ENCODE measurements at regions of chr12 and their contacts with region 1.

Region 1: DNA sequence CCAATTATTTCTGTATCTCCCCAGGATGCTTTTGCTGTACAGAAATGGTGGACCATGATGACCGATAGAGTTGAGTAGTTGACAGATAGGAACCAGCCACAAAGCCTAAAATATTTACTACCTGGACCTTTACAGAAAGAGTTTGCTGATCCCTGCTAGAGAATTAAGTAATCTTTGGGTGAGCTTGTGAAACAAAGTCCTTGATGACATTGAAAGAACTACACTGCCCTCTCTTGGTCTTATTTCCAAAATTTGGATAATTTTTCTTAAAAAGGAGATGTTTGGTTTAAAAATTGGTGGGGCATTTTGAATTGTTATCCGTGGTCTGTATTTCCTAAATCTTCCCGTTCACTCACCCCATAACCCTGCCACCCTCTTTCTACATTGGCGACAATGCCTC is 13.7 kb upstream of the TCTN1 start:
- DNase-seq: no peak
- H3K4me3 Mint-ChIP-seq: no peak overlapping the region
- H3K27ac Mint-ChIP-seq: no peak overlapping the region
- H3K4me1 Mint-ChIP-seq: peaks cover 13% of the 10 kb centered on the region
- H3K27me3 Mint-ChIP-seq: no peaks in the 10 kb centered on the region

Region 2: GRCh38 chr12:110234755-110235154 is 365.5 kb before region 1 on chr12:
- CTCF ChIA-PET with region 1: no interaction called
- POLR2A ChIA-PET with region 1: no interaction called
- DNase-seq: no peak
- H3K4me3 Mint-ChIP-seq: no peak overlapping the region
- H3K27ac Mint-ChIP-seq: no peak overlapping the region
- H3K4me1 Mint-ChIP-seq: no peaks in the 10 kb centered on the region
- H3K27me3 Mint-ChIP-seq: peaks cover 14% of the 10 kb centered on the region

Region 3: GRCh38 chr12:110468212-110469048 is 131.8 kb before region 1 on chr12 and contains the starts of genes FAM216A and GPN3:
- CTCF ChIA-PET with region 1: interaction called, 81 read pairs
- POLR2A ChIA-PET with region 1: interaction called, 24 read pairs
- DNase-seq: peak; percentile 98
- H3K4me3 Mint-ChIP-seq: peak within 1 kb of the TSS; percentile 92
- H3K27ac Mint-ChIP-seq: peak within 1 kb of the TSS; percentile 95
- H3K4me1 Mint-ChIP-seq: peaks cover 37% of the 10 kb centered on the region
- H3K27me3 Mint-ChIP-seq: no peaks in the 10 kb centered on the region
- total RNA-seq, gene FAM216A: 14.7 to 16.7 TPM
- total RNA-seq, gene GPN3: 18.9 to 21.6 TPM

Region 4: GRCh38 chr12:110513842-110514241 is 86.4 kb before region 1 on chr12:
- CTCF ChIA-PET with region 1: interaction called, 150 read pairs
- POLR2A ChIA-PET with region 1: interaction called, 5 read pairs
- DNase-seq: no peak
- H3K4me3 Mint-ChIP-seq: no peak overlapping the region
- H3K27ac Mint-ChIP-seq: no peak overlapping the region
- H3K4me1 Mint-ChIP-seq: no peaks in the 10 kb centered on the region
- H3K27me3 Mint-ChIP-seq: peaks cover 5% of the 10 kb centered on the region

Region 5: DNA sequence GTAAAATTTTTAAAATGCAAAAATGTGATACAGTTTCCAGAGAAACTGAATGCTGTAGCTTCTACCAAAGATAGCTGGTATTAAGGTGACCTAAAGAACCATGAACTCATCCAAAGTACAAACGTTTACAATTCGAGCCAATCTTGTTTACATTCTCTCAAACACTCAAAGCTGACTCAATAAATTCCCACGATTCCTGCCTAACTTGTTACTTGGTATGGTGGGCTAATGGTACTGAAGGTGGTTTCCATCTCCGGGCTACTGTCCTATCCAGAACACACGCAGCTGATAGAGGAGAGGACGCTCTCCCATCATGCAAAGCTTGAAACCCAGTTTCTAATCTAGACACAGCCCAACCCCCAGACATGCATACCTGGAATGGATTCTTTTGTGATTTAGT is 66.6 kb before region 1 on chr12:
- CTCF ChIA-PET with region 1: interaction called, 24 read pairs
- POLR2A ChIA-PET with region 1: interaction called, 3 read pairs
- DNase-seq: no peak
- H3K4me3 Mint-ChIP-seq: no peak overlapping the region
- H3K27ac Mint-ChIP-seq: no peak overlapping the region
- H3K4me1 Mint-ChIP-seq: peaks cover 17% of the 10 kb centered on the region
- H3K27me3 Mint-ChIP-seq: no peaks in the 10 kb centered on the region

Region 6: DNA sequence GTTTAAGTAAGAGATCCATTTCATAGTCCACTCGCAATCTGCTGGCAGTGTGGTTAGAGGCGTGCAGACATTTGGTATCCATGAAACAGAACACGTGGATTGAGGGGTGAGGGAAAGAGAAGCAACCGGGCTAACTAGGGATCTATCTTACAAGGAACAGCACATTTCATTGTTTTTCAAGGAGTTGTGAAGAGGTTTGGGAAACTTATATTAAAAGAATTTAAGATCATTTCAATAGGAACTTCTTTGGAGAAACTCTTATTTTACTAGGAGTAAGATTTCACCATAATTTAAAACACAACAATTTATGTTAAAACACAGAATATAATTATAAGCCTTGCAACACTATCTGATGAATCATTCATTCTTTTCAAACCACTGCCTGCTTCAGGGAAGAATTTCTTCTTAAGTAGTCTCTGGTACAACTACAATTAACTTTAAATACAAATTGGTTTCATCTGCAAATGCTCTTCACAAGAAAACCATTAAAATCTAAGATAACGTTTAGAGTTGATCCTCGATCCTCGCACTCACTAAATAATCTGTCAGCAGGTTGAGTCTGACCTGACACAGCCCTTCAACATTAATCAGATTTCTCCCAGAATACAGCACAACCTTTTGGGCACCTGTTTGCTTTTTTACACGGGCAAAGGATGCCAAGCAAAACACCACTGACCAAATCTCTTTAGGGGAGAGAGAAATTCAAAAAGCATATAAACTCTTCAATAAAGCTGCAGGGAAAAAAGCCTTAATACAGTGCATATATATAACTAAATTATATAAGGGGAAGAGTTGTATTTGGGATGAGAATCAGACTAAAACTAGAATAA is 44.5 kb before region 1 on chr12:
- CTCF ChIA-PET with region 1: interaction called, 110 read pairs
- POLR2A ChIA-PET with region 1: interaction called, 15 read pairs
- DNase-seq: no peak
- H3K4me3 Mint-ChIP-seq: no peak overlapping the region
- H3K27ac Mint-ChIP-seq: no peak overlapping the region
- H3K4me1 Mint-ChIP-seq: peaks cover 30% of the 10 kb centered on the region
- H3K27me3 Mint-ChIP-seq: no peaks in the 10 kb centered on the region

Region 7: DNA sequence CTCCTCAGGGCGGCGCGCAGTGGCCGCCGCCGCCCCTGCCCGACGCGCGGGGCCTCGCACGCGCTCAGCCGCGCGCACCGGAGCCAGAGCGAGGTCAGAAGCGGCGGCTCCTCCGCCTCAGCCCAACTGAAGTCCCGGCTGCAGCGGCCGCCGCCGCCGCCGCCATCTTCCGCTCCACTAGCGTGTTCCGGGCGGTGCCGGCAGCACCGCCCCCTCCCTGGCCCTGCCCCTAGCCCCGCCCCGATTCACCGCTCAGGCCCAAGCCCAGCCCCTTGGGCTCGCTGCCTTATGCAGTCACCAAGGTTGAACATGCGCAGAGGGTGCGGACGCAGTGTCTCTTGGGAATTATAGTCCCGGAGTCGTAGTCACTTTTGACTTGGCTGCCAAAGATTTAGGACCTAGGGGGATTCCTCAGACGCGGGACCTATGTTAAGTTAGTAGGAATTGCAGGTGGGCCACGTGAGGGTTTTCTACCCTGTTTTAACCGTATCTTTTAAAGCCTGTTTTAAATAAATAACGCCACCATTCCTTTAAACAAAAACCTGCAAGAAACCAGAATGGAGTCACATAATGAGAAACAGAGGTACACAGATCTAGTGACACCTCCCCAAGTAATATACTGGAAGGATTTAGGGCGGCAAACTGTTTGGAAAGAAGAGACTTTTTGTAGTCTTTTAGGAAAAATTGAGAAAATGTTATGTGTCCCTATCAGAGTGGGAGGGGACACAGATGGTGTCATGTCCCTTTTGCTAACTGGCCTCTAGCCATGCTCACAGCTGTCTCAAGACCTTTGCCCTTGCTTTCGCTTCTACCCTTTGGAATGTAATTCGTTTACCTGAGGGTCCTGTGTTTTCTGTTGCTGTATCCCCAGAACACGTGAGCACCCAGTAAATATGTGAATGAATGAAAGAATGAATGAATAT is 16.9 kb before region 1 on chr12 and contains the start of gene PPTC7:
- CTCF ChIA-PET with region 1: interaction called, 27 read pairs
- POLR2A ChIA-PET with region 1: interaction called, 13 read pairs
- DNase-seq: peak; percentile 97
- H3K4me3 Mint-ChIP-seq: peak within 1 kb of the TSS; percentile 88
- H3K27ac Mint-ChIP-seq: peak within 1 kb of the TSS; percentile 88
- H3K4me1 Mint-ChIP-seq: peaks cover 64% of the 10 kb centered on the region
- H3K27me3 Mint-ChIP-seq: no peaks in the 10 kb centered on the region
- total RNA-seq, gene PPTC7: 31.5 to 31.8 TPM

Measured in activated CD4-positive, alpha-beta memory T cell treated with anti-CD3 and anti-CD28 coated beads, Interleukin-2, amount 10 ng/mL, durations not matched to agents 7 days and 5 days (primary cell).